AG04450 (cell line): ENCODE measurements at regions of chr7 and their contacts with region 1.

Region 1: GRCh38 chr7:31744294-31744874 is 57.4 kb downstream of the PPP1R17 start:
- DNase-seq: peak; percentile 36
- H3K4me3 ChIP-seq: no peak overlapping the region
- H3K27ac ChIP-seq: no peak overlapping the region
- H3K27me3 ChIP-seq: no peaks in the 10 kb centered on the region
- CTCF ChIP-seq: peak; percentile 83

Region 2: DNA sequence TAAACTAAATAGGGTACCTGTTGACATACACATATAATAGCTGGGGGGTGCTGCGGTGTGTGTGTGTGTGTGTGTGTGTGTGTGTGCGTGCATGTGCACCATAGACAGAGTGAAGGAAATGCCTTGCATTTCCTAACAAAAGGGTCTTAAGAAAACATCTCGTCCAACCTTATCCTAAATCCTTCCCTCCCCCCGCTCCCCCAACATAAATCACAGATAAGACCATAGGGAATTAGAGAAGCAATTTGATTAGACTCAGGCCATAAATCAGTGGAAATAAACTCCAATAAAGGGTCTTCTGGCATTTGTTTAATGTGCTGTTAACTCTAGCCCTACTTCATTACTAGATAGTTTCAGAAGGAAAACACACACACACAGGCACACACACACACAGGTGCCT is 91.1 kb after region 1 on chr7:
- CTCF ChIA-PET with region 1: no interaction called
- POLR2A ChIA-PET with region 1: no interaction called
- DNase-seq: no peak
- H3K4me3 ChIP-seq: no peak overlapping the region
- H3K27ac ChIP-seq: no peak overlapping the region
- H3K27me3 ChIP-seq: no peaks in the 10 kb centered on the region
- CTCF ChIP-seq: no peak

Region 3: DNA sequence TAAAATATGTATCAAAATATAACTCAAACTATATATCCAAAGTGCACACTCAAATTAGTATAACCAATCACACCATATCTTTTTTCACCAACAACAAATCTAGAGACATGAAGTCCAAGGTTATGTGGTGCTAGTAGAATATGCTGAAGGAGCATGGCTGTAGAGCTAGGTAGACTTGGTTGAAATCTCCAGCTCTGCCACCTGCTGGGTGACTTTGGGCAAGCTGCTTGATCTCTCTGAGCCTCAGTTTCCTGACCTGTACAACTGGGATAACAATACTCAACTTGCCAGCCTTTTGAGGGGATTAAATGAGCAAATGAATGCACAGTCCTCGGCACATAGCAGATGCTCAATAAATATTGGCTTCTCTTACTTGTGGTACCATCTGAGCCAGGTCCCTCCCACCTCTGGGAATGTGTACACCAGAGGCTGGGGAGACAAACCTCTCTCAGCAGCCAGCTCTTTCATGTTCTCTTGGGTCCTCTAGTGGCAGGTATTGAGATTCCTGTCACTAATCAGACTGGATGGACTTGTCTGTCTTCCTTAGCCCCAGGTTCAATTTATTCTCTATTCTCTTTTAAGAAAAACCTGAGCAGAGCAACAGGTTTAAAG is 420.1 kb after region 1 on chr7:
- CTCF ChIA-PET with region 1: interaction called, 14 read pairs
- POLR2A ChIA-PET with region 1: no interaction called
- DNase-seq: no peak
- H3K4me3 ChIP-seq: no peak overlapping the region
- H3K27ac ChIP-seq: no peak overlapping the region
- H3K27me3 ChIP-seq: no peaks in the 10 kb centered on the region
- CTCF ChIP-seq: peak; percentile 41

Region 4: GRCh38 chr7:32204361-32205018 is 460.1 kb after region 1 on chr7:
- CTCF ChIA-PET with region 1: interaction called, 137 read pairs
- POLR2A ChIA-PET with region 1: no interaction called
- DNase-seq: peak; percentile 41
- H3K4me3 ChIP-seq: no peak overlapping the region
- H3K27ac ChIP-seq: no peak overlapping the region
- H3K27me3 ChIP-seq: no peaks in the 10 kb centered on the region
- CTCF ChIP-seq: peak; percentile 64